CD8-positive, alpha-beta T cell (primary cell): ENCODE measurements at regions of chr5 and their contacts with region 1.

Region 1: GRCh38 chr5:35926389-35927051 is 11.9 kb downstream of the CAPSL start:
- DNase-seq: peak; percentile 35 to 79 (median 66)
- ATAC-seq: peak; percentile 56
- H3K4me3 ChIP-seq: no peak overlapping the region
- H3K4me3 Mint-ChIP-seq: peak overlapping the region; percentile 33
- H3K27ac ChIP-seq: no peak overlapping the region
- H3K27ac Mint-ChIP-seq: no peak overlapping the region
- H3K4me1 ChIP-seq: peaks cover 14% of the 10 kb centered on the region
- H3K4me1 Mint-ChIP-seq: peaks cover 36% of the 10 kb centered on the region
- H3K27me3 ChIP-seq: no peaks in the 10 kb centered on the region
- H3K27me3 Mint-ChIP-seq: peaks cover 4% of the 10 kb centered on the region
- CTCF ChIP-seq: peak; percentile 84

Region 2: GRCh38 chr5:34957857-34958690 is 968.4 kb before region 1 on chr5:
- CTCF ChIA-PET with region 1: interaction called, 3 read pairs
- POLR2A ChIA-PET with region 1: no interaction called
- intact Hi-C with region 1: loop called in 1 of 2 experiments (anchors 1 kb)
- DNase-seq: peak in 2 of 9 experiments; percentile 9 to 24
- ATAC-seq: no peak
- H3K4me3 ChIP-seq: no peak overlapping the region
- H3K4me3 Mint-ChIP-seq: no peak overlapping the region
- H3K27ac ChIP-seq: no peak overlapping the region
- H3K27ac Mint-ChIP-seq: peak overlapping the region; percentile 50
- H3K4me1 ChIP-seq: no peaks in the 10 kb centered on the region
- H3K4me1 Mint-ChIP-seq: no peaks in the 10 kb centered on the region
- H3K27me3 ChIP-seq: no peaks in the 10 kb centered on the region
- H3K27me3 Mint-ChIP-seq: no peaks in the 10 kb centered on the region
- CTCF ChIP-seq: peak; percentile 45

Region 3: DNA sequence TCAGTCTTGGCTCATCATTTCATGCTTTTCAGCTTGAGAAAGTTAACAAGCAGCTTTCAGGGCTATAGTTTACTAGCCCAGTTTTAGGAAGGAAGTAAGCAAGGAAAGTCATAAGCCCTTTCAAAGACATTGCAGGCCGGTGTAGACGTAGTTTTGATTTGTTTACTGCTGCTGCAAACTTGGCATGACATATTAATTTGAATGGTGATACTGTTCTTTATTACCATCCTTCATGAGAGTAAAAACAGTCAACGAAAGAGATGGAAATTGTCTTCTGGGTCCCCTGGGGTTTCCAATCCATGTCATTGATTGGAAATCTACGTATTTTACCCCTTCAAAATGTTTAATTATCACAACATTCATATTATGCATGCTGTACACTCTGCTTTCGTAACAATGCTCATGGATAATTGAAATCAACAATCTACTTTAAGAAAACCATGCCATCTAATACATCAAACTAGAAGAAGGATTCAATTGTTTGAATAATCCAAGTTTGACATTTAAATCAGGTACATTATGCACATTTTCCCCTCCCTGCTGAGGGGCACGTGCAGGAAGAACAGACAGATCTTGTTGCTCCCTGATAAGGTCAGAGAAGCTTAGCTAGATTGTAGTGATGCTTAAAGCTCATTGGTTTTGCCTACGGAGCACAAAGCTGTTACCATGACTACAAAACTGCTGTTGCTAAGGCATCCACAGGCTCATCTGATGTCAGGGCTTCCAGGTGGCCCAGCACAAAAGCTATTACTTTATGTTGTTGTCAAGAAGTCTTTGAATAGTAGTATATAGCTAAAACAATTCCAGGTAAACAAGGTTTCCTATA is 556.3 kb before region 1 on chr5:
- CTCF ChIA-PET with region 1: no interaction called
- POLR2A ChIA-PET with region 1: no interaction called
- intact Hi-C with region 1: loop called in 1 of 2 experiments (anchors 5 kb)
- DNase-seq: peak in 1 of 9 experiments; percentile 1
- ATAC-seq: no peak
- H3K4me3 ChIP-seq: no peak overlapping the region
- H3K4me3 Mint-ChIP-seq: no peak overlapping the region
- H3K27ac ChIP-seq: no peak overlapping the region
- H3K27ac Mint-ChIP-seq: no peak overlapping the region
- H3K4me1 ChIP-seq: no peaks in the 10 kb centered on the region
- H3K4me1 Mint-ChIP-seq: no peaks in the 10 kb centered on the region
- H3K27me3 ChIP-seq: no peaks in the 10 kb centered on the region
- H3K27me3 Mint-ChIP-seq: peaks cover 2% of the 10 kb centered on the region
- CTCF ChIP-seq: no peak

Region 4: GRCh38 chr5:35651002-35651756 is 275.3 kb before region 1 on chr5:
- CTCF ChIA-PET with region 1: interaction called, 363 read pairs
- POLR2A ChIA-PET with region 1: interaction called, 22 read pairs
- intact Hi-C with region 1: loop called (anchors 1 kb)
- DNase-seq: peak; percentile 29 to 79 (median 63)
- ATAC-seq: peak; percentile 95
- H3K4me3 ChIP-seq: no peak overlapping the region
- H3K4me3 Mint-ChIP-seq: no peak overlapping the region
- H3K27ac ChIP-seq: no peak overlapping the region
- H3K27ac Mint-ChIP-seq: peak overlapping the region; percentile 30
- H3K4me1 ChIP-seq: peaks cover 7% of the 10 kb centered on the region
- H3K4me1 Mint-ChIP-seq: peaks cover 10% of the 10 kb centered on the region
- H3K27me3 ChIP-seq: no peaks in the 10 kb centered on the region
- H3K27me3 Mint-ChIP-seq: no peaks in the 10 kb centered on the region
- CTCF ChIP-seq: peak; percentile 77

Region 5: GRCh38 chr5:35777358-35778087 is 149.0 kb before region 1 on chr5:
- CTCF ChIA-PET with region 1: interaction called, 74 read pairs
- POLR2A ChIA-PET with region 1: interaction called, 4 read pairs
- intact Hi-C with region 1: loop called (anchors 1 kb)
- DNase-seq: peak; percentile 40 to 88 (median 81)
- ATAC-seq: peak; percentile 64
- H3K4me3 ChIP-seq: no peak overlapping the region
- H3K4me3 Mint-ChIP-seq: peak overlapping the region; percentile 58
- H3K27ac ChIP-seq: no peak overlapping the region
- H3K27ac Mint-ChIP-seq: peak overlapping the region; percentile 92
- H3K4me1 ChIP-seq: peaks cover 58% of the 10 kb centered on the region
- H3K4me1 Mint-ChIP-seq: peaks cover 68% of the 10 kb centered on the region
- H3K27me3 ChIP-seq: no peaks in the 10 kb centered on the region
- H3K27me3 Mint-ChIP-seq: no peaks in the 10 kb centered on the region
- CTCF ChIP-seq: peak; percentile 79

Region 6: GRCh38 chr5:35857606-35858205 is 68.8 kb before region 1 on chr5:
- CTCF ChIA-PET with region 1: interaction called, 21 read pairs
- POLR2A ChIA-PET with region 1: interaction called, 7 read pairs
- intact Hi-C with region 1: loop called in 1 of 2 experiments (anchors 1 kb)
- DNase-seq: peak in 3 of 9 experiments; percentile 8 to 46 (median 28)
- ATAC-seq: no peak
- H3K4me3 ChIP-seq: peak overlapping the region; percentile 66 to 80
- H3K4me3 Mint-ChIP-seq: peak overlapping the region; percentile 92
- H3K27ac ChIP-seq: peak overlapping the region; percentile 94 to 97
- H3K27ac Mint-ChIP-seq: peak overlapping the region; percentile 100
- H3K4me1 ChIP-seq: peaks cover 55% of the 10 kb centered on the region
- H3K4me1 Mint-ChIP-seq: peaks cover 70% of the 10 kb centered on the region
- H3K27me3 ChIP-seq: no peaks in the 10 kb centered on the region
- H3K27me3 Mint-ChIP-seq: no peaks in the 10 kb centered on the region
- CTCF ChIP-seq: no peak

Region 7: GRCh38 chr5:35884115-35884788 is 42.3 kb before region 1 on chr5:
- CTCF ChIA-PET with region 1: interaction called, 30 read pairs
- POLR2A ChIA-PET with region 1: interaction called, 7 read pairs
- intact Hi-C with region 1: loop called in 1 of 2 experiments (anchors 5 kb)
- DNase-seq: peak in 2 of 9 experiments; percentile 35 to 57
- ATAC-seq: peak; percentile 47
- H3K4me3 ChIP-seq: no peak overlapping the region
- H3K4me3 Mint-ChIP-seq: peak overlapping the region; percentile 3
- H3K27ac ChIP-seq: peak overlapping the region in 1 of 2 experiments; percentile 44
- H3K27ac Mint-ChIP-seq: peak overlapping the region; percentile 89
- H3K4me1 ChIP-seq: peaks cover 26% of the 10 kb centered on the region
- H3K4me1 Mint-ChIP-seq: peaks cover 47% of the 10 kb centered on the region
- H3K27me3 ChIP-seq: no peaks in the 10 kb centered on the region
- H3K27me3 Mint-ChIP-seq: no peaks in the 10 kb centered on the region
- CTCF ChIP-seq: no peak

Region 8: GRCh38 chr5:36017004-36017403 is 90.5 kb after region 1 on chr5:
- CTCF ChIA-PET with region 1: no interaction called
- POLR2A ChIA-PET with region 1: no interaction called
- intact Hi-C with region 1: no loop called
- DNase-seq: no peak
- ATAC-seq: no peak
- H3K4me3 ChIP-seq: no peak overlapping the region
- H3K4me3 Mint-ChIP-seq: no peak overlapping the region
- H3K27ac ChIP-seq: no peak overlapping the region
- H3K27ac Mint-ChIP-seq: no peak overlapping the region
- H3K4me1 ChIP-seq: no peaks in the 10 kb centered on the region
- H3K4me1 Mint-ChIP-seq: no peaks in the 10 kb centered on the region
- H3K27me3 ChIP-seq: no peaks in the 10 kb centered on the region
- H3K27me3 Mint-ChIP-seq: no peaks in the 10 kb centered on the region
- CTCF ChIP-seq: no peak